OCI-LY7 (cell line): ENCODE measurements at regions of chr12 and their contacts with region 1.

Region 1: GRCh38 chr12:57520053-57520871 is at the start of gene DDIT3:
- DNase-seq: peak; percentile 100
- H3K4me3 ChIP-seq: peak within 1 kb of the TSS; percentile 84
- H3K27ac ChIP-seq: peak within 1 kb of the TSS; percentile 97
- H3K4me1 ChIP-seq: peaks cover 49% of the 10 kb centered on the region
- CTCF ChIP-seq: no peak
- total RNA-seq, gene DDIT3: 42.7 and 43.7 TPM in 2 replicates

Region 2: DNA sequence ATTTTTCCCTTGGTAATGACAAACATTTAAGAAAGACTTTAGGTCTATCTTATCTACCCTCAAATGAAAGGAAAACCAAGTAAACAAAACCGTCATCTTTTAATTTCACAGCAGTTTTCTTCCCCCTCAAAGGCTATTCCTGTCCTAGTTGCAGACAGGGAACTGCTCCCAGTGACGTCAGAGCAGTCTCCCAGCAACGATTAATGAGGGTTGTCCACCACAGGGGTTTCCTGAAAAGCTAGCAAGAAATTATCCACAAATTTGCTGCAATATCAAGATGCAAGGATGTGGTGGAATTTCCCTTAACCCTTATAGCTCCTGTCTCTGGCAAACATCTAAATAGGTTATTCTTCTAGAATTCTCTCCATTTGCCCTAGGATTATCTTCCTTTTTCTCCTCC is 180.2 kb before region 1 on chr12:
- CTCF ChIA-PET with region 1: no interaction called
- POLR2A ChIA-PET with region 1: no interaction called
- intact Hi-C with region 1: no loop called
- DNase-seq: no peak
- H3K4me3 ChIP-seq: no peak overlapping the region
- H3K27ac ChIP-seq: no peak overlapping the region
- H3K4me1 ChIP-seq: no peaks in the 10 kb centered on the region
- CTCF ChIP-seq: no peak

Region 3: DNA sequence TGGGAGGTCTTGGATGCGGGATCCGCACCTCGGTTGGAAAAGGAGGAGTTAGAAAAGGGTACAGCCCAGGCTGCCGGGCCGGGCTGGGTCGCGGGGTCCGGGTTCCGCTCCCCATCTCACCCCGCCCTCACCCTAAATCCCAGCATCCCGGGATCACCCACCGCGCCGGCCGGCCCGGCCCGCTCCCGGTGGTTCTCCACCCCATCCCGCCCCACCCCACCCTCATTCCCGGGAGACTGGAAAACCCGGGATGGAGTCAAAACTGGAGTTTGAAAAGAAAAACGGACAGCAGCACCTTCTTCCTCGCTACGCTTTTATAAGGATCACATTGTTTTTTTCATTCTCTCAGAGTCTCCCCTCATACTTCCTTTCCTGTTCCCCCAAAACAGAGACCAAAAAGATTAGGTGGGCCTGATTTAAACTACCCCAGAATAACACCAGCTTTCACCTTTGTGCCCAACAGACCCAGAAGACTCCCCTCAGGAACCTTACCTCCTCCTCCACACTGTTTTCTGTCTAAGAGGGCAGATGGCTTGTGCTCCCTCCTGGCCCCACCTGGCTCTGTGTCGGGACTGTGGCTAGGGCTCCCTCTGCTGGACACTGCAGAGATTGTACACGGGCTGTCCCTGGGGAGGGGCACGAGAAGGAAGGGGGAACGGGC is 57.9 kb before region 1 on chr12:
- CTCF ChIA-PET with region 1: interaction called, 3 read pairs
- POLR2A ChIA-PET with region 1: no interaction called
- intact Hi-C with region 1: loop called (anchors 1 kb)
- DNase-seq: peak; percentile 94
- H3K4me3 ChIP-seq: peak overlapping the region; percentile 77
- H3K27ac ChIP-seq: peak overlapping the region; percentile 67
- H3K4me1 ChIP-seq: peaks cover 26% of the 10 kb centered on the region
- CTCF ChIP-seq: peak; percentile 98

Region 4: DNA sequence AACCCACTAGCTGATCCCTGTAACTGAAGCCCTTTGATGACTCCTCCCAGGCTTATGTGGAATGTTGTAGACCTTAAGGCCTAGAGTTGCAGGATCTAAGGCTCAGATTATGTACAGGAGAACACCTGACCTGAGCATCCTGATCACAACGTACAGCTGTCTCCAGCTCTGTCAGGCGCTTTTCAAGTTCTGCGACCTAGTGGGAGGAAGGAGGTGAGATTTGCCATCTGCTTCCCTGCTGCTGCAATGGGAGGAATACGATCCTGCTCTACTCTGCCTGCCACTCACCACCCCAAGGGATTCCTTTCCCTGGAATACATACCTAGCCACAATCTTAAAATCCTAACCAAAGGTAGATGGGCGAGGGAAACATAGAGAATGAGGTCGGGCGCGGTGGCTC is 12.8 kb after region 1 on chr12:
- CTCF ChIA-PET with region 1: interaction called, 3 read pairs
- POLR2A ChIA-PET with region 1: interaction called, 17 read pairs
- intact Hi-C with region 1: no loop called
- DNase-seq: no peak
- H3K4me3 ChIP-seq: no peak overlapping the region
- H3K27ac ChIP-seq: no peak overlapping the region
- H3K4me1 ChIP-seq: no peaks in the 10 kb centered on the region
- CTCF ChIP-seq: no peak

Region 5: DNA sequence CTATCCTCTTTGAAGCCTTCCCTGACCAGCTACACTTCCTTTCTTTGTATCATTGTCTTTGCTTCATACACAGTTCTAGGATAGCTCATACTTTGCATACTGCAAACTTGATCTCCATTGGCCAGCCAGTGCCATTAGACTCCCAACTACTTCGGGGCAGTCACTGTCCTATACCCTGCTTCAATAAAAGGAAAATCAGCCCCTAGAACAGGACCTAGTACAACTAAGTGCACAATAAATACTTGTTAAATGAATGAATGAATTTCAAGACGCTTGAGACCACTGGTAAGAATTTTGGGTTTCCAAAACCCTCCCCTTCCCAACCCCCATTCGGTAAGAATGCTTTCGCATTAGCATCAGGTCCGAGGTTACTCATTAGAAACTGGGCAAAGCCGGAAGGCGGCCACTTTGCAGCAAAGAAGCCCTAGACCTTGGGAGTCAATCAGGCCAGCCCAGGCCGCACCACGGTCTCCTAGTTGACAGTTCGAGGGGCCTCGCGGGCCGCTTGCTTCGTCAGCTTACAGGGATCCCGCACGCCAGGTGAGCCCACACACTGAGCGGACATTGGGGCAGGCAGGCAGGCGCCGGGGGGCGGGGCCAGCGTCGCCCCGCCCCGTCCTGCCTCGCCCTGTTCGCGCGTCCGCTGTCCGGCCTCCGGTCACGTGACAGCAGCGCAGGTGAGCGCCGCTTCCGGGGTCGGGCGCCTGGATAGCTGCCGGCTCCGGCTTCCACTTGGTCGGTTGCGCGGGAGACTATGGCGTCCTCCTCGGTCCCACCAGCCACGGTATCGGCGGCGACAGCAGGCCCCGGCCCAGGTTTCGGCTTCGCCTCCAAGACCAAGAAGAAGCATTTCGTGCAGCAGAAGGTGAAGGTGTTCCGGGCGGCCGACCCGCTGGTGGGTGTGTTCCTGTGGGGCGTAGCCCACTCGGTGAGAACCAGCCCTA is 70.5 kb after region 1 on chr12 and contains the start of gene PIP4K2C:
- CTCF ChIA-PET with region 1: no interaction called
- POLR2A ChIA-PET with region 1: no interaction called
- intact Hi-C with region 1: loop called (anchors 2 kb)
- DNase-seq: peak; percentile 94
- H3K4me3 ChIP-seq: peak within 1 kb of the TSS; percentile 78
- H3K27ac ChIP-seq: no peak within 1 kb of the TSS
- H3K4me1 ChIP-seq: peaks cover 18% of the 10 kb centered on the region
- CTCF ChIP-seq: no peak
- total RNA-seq, gene PIP4K2C: 9.0 and 14.5 TPM in 2 replicates

Region 6: DNA sequence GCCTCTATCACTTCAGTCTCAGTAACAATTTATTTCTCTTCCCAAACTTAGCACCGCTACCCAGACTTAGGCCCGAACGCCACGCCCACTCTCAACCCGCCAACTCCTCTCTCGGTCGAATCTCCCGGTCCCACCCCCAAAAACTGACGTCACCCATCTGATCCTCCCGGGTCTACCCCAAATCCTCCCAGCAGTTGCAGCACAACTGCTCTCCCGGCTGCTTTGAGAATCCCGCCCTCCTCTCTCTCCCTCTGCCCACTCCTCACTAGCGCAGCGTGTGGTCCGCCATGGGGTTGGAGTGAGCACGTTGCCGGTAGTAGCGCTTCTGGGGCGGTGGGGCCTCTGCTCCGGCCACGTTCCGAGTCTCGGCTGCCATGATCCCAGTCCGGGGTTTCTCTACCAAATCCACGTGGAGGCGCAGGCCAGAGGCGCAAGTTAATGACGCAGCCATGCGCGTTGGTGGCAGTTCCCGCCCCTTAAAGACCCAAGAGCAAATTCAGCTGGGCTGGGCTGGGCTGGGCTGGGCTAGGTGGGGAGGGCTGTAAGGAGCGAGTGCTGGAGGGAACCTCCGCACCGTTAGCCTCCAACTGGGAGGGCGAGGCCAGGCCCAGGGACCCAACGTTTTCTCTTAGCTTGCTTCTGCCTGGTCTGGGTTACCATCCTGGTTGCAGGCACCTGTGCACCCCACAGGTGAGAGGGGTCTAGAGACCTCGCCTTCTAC is 251.6 kb after region 1 on chr12 and contains the start of gene METTL1:
- CTCF ChIA-PET with region 1: interaction called, 10 read pairs
- POLR2A ChIA-PET with region 1: no interaction called
- intact Hi-C with region 1: no loop called
- DNase-seq: peak; percentile 96
- H3K4me3 ChIP-seq: peak within 1 kb of the TSS; percentile 81
- H3K27ac ChIP-seq: peak within 1 kb of the TSS; percentile 70
- H3K4me1 ChIP-seq: peaks cover 25% of the 10 kb centered on the region
- CTCF ChIP-seq: no peak
- total RNA-seq, gene METTL1: 12.5 and 22.2 TPM in 2 replicates

Region 7: DNA sequence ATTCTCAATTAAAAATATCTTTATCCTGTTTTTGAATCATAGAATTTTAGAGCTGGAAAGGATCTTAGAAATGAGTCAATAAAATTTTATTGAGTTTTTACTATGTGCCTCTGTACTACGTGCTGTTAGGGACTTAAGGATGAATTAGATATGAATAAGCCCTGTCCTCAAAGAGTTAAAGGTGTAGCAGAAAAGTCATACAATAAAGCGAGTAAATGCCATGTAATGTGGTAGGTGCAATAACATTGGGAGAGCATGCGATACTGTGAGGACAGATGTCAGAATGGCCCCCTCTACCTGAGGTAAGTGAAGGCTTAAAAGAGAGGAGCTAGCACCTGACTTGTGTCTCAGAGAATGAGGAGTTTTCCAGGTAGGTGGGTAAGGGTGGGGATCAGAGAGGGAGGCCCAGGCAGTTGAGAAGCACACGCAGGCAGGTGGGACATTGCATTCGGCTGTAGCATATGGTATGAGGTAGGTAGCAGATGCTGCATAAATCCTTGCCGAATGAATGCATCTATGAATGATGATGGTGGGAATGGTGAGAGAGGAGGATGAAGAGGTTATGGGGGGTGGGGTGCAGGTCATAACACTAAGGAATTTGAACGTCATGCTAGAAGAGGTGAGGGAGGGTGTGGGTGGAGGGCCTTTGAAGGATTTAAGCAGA is 385.7 kb after region 1 on chr12:
- CTCF ChIA-PET with region 1: no interaction called
- POLR2A ChIA-PET with region 1: no interaction called
- intact Hi-C with region 1: no loop called
- DNase-seq: no peak
- H3K4me3 ChIP-seq: no peak overlapping the region
- H3K27ac ChIP-seq: no peak overlapping the region
- H3K4me1 ChIP-seq: peaks cover 8% of the 10 kb centered on the region
- CTCF ChIP-seq: no peak